Lower leg skin (tissue), 4 donors: ENCODE measurements at regions of chr1 and their contacts with region 1.

Region 1: DNA sequence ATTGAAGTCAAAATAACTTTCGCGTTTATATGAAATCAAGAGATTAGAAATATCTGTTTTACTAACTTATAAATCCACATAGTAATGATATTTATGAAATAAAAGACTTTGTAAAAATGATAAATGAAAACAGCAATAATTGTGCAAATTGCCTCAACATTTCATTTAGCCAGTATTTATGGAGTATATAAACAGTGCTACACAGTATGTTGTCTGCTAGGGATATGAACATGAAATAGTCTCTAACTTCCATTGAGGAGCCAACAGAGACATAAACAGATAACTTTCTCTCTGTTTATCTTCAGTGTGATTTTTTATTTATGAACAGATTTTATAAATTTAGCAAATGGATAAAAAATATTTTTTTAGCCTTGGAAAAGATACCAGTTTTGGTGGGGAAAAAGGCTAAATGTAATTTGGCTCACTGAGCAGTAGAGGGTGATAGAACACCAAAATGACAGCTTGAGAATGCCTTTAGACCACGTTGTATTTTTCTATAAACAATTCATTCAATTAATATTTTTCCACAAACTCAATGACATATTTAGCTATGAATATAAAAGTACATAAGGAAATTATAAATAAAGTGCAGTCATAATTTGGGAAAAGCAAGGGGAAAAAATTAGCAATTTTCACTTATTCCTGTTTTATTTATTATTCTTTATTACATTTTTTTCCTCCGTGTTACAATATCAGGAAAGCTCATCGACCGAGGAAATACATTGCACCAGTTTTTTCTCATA is 47.5 kb upstream of the EEIG2 start:
- DNase-seq: no peak
- H3K4me3 ChIP-seq: no peak overlapping the region
- CTCF ChIP-seq: peak in 1 of 3 donors; percentile 91
- POLR2A ChIP-seq: no peak

Region 2: DNA sequence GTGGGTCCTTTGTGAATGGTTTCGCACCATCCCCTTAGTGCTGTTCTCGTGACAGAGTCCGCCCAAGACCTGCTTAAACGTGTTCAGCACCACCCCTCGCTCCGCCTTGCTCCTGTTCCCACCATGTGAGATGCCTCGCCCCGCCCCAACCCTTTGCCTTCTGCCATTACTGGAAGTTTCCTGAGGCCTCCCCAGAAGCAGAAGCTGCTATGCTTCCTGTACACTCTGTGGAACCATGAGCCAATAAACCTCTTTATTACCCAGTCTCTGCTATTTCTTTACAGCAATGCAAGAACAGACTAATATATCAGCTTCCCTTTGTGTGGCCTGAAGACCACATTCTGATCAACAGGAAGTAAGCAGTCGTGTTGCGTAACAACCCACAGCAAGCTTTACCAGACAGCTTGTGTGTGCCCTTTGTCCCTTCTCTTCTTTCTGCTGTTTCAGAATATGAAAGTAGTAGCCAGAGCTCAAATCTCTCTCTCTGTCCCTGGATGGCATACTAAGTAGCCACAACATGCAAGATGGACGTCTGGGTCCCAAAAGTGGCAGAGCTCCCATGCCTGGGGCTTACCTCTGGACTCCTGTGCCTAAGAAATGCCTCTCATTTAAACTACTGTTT is 134.3 kb after region 1 on chr1:
- intact Hi-C with region 1: loop called (anchors 5 kb)
- DNase-seq: peak; percentile 71 to 93
- H3K4me3 ChIP-seq: no peak overlapping the region
- CTCF ChIP-seq: no peak
- POLR2A ChIP-seq: no peak

Region 3: GRCh38 chr1:108828022-108828961 is 315.9 kb after region 1 on chr1:
- intact Hi-C with region 1: loop called (anchors 10 kb)
- DNase-seq: peak; percentile 84 to 96
- H3K4me3 ChIP-seq: no peak overlapping the region
- CTCF ChIP-seq: peak in 1 of 3 donors; percentile 31
- POLR2A ChIP-seq: no peak